Caco-2 (cell line): ENCODE measurements at regions of chr9 and their contacts with region 1.

Region 1: DNA sequence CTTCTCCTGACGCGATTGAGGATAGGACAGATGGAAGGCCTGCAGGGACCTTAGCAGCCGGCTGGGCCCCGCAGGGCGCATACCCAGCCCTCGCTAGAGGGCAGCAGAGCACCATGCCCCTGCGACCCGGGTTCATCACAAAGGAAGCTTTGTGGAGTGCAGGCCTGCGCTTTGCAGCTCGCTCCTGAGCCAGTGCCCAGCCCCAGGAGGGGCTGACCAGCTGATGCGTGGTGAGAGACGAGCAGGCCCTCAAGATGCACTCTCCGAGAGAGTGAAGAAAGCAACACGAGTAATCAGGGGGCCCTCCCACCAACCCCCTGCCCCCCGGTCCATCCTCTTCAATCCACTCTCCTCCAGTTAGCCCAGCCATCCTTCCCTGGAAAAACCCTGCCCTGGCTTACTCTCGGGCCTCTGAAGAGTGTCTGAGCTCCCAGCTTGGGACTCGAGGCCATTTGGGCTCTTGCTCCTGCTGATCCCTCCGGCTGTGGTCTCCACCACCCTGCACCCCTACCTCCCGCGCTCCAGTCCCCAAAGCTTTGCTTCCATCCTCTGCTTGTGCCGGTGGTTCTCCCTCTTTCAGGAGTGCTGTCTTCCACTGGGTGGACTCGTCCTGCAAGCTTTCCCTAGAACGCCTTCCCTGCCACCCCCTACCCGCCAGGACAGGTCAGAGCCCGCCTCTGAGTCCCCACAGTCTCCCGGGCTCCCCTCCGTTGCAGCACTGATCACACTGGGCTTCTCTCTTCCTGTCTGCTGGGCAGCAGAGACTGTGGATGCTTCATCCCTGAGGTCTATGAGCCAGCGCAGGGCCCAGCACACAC is 9.1 kb upstream of the KIF12 start:
- DNase-seq: peak; percentile 80 to 88
- H3K4me3 ChIP-seq: no peak overlapping the region
- H3K4me3 Mint-ChIP-seq: no peak overlapping the region
- H3K27ac Mint-ChIP-seq: peak overlapping the region; percentile 12
- H3K4me1 ChIP-seq: no peaks in the 10 kb centered on the region
- H3K4me1 Mint-ChIP-seq: peaks cover 6% of the 10 kb centered on the region
- H3K27me3 ChIP-seq: no peaks in the 10 kb centered on the region
- H3K27me3 Mint-ChIP-seq: peaks cover 2% of the 10 kb centered on the region
- CTCF ChIP-seq: peak; percentile 97 to 98

Region 2: GRCh38 chr9:114141553-114142402 is 33.6 kb after region 1 on chr9:
- CTCF ChIA-PET with region 1: interaction called, 12 read pairs
- POLR2A ChIA-PET with region 1: no interaction called
- intact Hi-C with region 1: no loop called
- DNase-seq: no peak
- H3K4me3 ChIP-seq: no peak overlapping the region
- H3K4me3 Mint-ChIP-seq: no peak overlapping the region
- H3K27ac Mint-ChIP-seq: no peak overlapping the region
- H3K4me1 ChIP-seq: peaks cover 16% of the 10 kb centered on the region
- H3K4me1 Mint-ChIP-seq: peaks cover 16% of the 10 kb centered on the region
- H3K27me3 ChIP-seq: no peaks in the 10 kb centered on the region
- H3K27me3 Mint-ChIP-seq: no peaks in the 10 kb centered on the region
- CTCF ChIP-seq: no peak

Region 3: DNA sequence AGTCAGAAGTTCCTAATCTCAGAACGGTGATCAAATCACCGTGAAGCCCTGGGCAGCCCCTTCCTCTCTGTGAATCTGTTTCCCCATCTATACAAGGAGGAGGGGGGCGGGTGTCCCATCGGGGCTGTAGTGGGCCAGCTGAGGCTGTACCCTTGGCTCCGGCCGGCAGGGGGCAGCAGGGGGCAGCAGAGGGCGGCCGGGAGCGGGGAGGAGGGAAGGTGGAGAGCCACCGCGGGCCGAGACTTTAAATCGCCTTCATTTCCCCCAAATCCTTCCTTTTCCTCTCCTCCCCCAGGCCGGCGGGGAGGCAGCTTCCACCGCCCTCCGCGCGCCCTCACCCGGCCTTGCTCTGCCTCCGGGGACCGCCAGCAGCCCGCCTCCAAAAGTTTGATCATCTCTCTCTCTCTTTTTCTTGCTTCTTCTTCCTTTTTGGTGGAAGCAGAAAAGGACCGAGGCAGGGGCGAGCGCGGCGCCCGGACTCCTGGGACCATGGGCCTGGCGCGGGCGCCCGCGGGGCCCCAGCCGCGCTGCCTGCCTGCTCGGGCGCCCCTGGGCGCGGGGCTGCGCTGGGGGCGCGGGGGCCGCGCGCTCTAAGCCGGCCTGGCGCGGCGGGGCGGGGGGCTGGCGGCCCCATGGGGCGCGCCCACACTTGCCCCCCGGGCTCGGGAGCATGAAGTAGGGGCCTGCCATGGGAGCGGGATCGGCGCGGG is 47.2 kb after region 1 on chr9 and contains the start of gene COL27A1:
- CTCF ChIA-PET with region 1: interaction called, 76 read pairs
- POLR2A ChIA-PET with region 1: no interaction called
- intact Hi-C with region 1: loop called (anchors 1 kb)
- DNase-seq: peak; percentile 82 to 93
- H3K4me3 ChIP-seq: peak within 1 kb of the TSS; percentile 81
- H3K4me3 Mint-ChIP-seq: peak within 1 kb of the TSS; percentile 78
- H3K27ac Mint-ChIP-seq: peak within 1 kb of the TSS; percentile 82
- H3K4me1 ChIP-seq: peaks cover 11% of the 10 kb centered on the region
- H3K4me1 Mint-ChIP-seq: peaks cover 13% of the 10 kb centered on the region
- H3K27me3 ChIP-seq: no peaks in the 10 kb centered on the region
- H3K27me3 Mint-ChIP-seq: no peaks in the 10 kb centered on the region
- CTCF ChIP-seq: peak; percentile 94 to 97
- total RNA-seq, gene COL27A1: 31.1 and 41.3 TPM in 2 replicates

Region 4: GRCh38 chr9:114263853-114264510 is 155.8 kb after region 1 on chr9:
- CTCF ChIA-PET with region 1: interaction called, 13 read pairs
- POLR2A ChIA-PET with region 1: no interaction called
- intact Hi-C with region 1: no loop called
- DNase-seq: peak in 1 of 2 experiments; percentile 46
- H3K4me3 ChIP-seq: no peak overlapping the region
- H3K4me3 Mint-ChIP-seq: no peak overlapping the region
- H3K27ac Mint-ChIP-seq: no peak overlapping the region
- H3K4me1 ChIP-seq: no peaks in the 10 kb centered on the region
- H3K4me1 Mint-ChIP-seq: no peaks in the 10 kb centered on the region
- H3K27me3 ChIP-seq: no peaks in the 10 kb centered on the region
- H3K27me3 Mint-ChIP-seq: no peaks in the 10 kb centered on the region
- CTCF ChIP-seq: peak in 1 of 2 experiments; percentile 28

Region 5: DNA sequence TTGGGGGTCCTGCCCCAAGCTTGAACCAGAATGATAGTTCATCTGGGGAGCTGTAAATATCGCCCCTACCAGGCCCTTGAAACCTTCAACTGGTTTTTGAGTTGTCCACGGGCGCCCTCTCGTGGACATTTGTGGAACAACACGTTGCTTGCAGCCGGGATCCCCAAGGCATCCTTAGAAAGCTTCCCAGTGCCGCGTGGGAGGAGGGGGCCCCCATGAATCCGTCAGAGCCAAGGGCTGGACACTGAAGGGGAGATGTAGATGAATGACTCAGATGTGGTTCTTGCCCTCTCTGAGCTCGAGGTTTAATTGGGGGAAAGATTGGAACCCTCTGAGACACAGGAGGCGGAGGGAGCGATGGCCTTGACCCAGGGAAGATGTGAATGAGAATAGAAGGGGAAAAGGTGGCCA is 182.8 kb after region 1 on chr9:
- CTCF ChIA-PET with region 1: interaction called, 84 read pairs
- POLR2A ChIA-PET with region 1: no interaction called
- intact Hi-C with region 1: loop called (anchors 1 kb)
- DNase-seq: peak; percentile 70 to 80
- H3K4me3 ChIP-seq: no peak overlapping the region
- H3K4me3 Mint-ChIP-seq: no peak overlapping the region
- H3K27ac Mint-ChIP-seq: no peak overlapping the region
- H3K4me1 ChIP-seq: peaks cover 14% of the 10 kb centered on the region
- H3K4me1 Mint-ChIP-seq: peaks cover 7% of the 10 kb centered on the region
- H3K27me3 ChIP-seq: no peaks in the 10 kb centered on the region
- H3K27me3 Mint-ChIP-seq: no peaks in the 10 kb centered on the region
- CTCF ChIP-seq: peak; percentile 81 to 92

Region 6: GRCh38 chr9:114304416-114305188 is 196.4 kb after region 1 on chr9:
- CTCF ChIA-PET with region 1: interaction called, 5 read pairs
- POLR2A ChIA-PET with region 1: no interaction called
- intact Hi-C with region 1: loop called (anchors 1 kb)
- DNase-seq: no peak
- H3K4me3 ChIP-seq: no peak overlapping the region
- H3K4me3 Mint-ChIP-seq: no peak overlapping the region
- H3K27ac Mint-ChIP-seq: no peak overlapping the region
- H3K4me1 ChIP-seq: no peaks in the 10 kb centered on the region
- H3K4me1 Mint-ChIP-seq: no peaks in the 10 kb centered on the region
- H3K27me3 ChIP-seq: no peaks in the 10 kb centered on the region
- H3K27me3 Mint-ChIP-seq: no peaks in the 10 kb centered on the region
- CTCF ChIP-seq: no peak